ENCODE measurements at regions of chr3 and their contacts with region 1.

Region 1: GRCh38 chr3:51538459-51539290 is at the start of gene RAD54L2:
- DNase-seq: peak; percentile 88
- H3K4me3 ChIP-seq: peak within 1 kb of the TSS; percentile 90 to 94 (median 92)
- H3K27ac ChIP-seq: peak within 1 kb of the TSS; percentile 89 to 95 (median 92)
- H3K4me1 ChIP-seq: peaks cover 0 to 24% (median 21%) of the 10 kb centered on the region in 4 donors
- H3K27me3 ChIP-seq: no peaks in the 10 kb centered on the region
- CTCF ChIP-seq: peak in 1 of 4 experiments; percentile 33
- EP300 ChIP-seq: no peak
- POLR2A ChIP-seq: no peak
- total RNA-seq, gene RAD54L2: 15.7 to 33.0 (median 24.7) TPM

Region 2: DNA sequence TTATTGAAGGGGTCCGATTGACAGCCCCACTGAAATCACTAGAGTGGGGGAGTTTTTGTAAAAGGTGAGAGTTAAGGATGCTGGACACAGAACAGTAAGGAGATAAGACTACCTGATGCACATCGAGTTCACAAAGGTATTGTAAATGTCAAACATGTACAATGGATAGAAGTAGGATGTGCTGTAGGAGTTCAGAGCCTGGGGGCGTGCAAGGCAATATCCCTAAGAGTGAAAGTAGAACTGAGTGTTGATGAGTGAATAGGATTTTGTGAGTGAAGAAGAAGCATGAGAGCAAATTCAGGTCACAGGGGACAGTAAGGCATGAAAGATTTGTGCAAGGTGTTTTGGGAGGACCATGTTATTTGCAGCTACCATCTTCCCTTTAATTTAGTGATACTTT is 842.4 kb before region 1 on chr3:
- intact Hi-C with region 1: no loop called
- DNase-seq: no peak
- H3K4me3 ChIP-seq: no peak overlapping the region
- H3K27ac ChIP-seq: no peak overlapping the region
- H3K4me1 ChIP-seq: no peaks in the 10 kb centered on the region
- H3K27me3 ChIP-seq: no peaks in the 10 kb centered on the region
- CTCF ChIP-seq: no peak
- EP300 ChIP-seq: no peak
- POLR2A ChIP-seq: no peak

Region 3: GRCh38 chr3:51617597-51617996 is 78.9 kb after region 1 on chr3:
- intact Hi-C with region 1: loop called (anchors 5 kb)
- DNase-seq: no peak
- H3K4me3 ChIP-seq: no peak overlapping the region
- H3K27ac ChIP-seq: peak overlapping the region in 3 of 4 donors; percentile 9 to 80 (median 36)
- H3K4me1 ChIP-seq: peaks cover 0 to 52% (median 35%) of the 10 kb centered on the region in 4 donors
- H3K27me3 ChIP-seq: no peaks in the 10 kb centered on the region
- CTCF ChIP-seq: no peak
- EP300 ChIP-seq: no peak
- POLR2A ChIP-seq: no peak